ENCODE measurements at regions of chr6 and their contacts with region 1.

Region 1: GRCh38 chr6:136249811-136250685 is at the start of gene MTFR2:
- ATAC-seq: peak; percentile 84 to 99 (median 97)
- H3K4me3 ChIP-seq: peak within 1 kb of the TSS; percentile 49 to 65 (median 53)
- H3K27ac ChIP-seq: peak within 1 kb of the TSS; percentile 5 to 8
- H3K4me1 ChIP-seq: peaks cover 3 to 7% of the 10 kb centered on the region in 2 donors
- total RNA-seq, gene MTFR2: 0.54 to 9.3 (median 2.3) TPM

Region 2: DNA sequence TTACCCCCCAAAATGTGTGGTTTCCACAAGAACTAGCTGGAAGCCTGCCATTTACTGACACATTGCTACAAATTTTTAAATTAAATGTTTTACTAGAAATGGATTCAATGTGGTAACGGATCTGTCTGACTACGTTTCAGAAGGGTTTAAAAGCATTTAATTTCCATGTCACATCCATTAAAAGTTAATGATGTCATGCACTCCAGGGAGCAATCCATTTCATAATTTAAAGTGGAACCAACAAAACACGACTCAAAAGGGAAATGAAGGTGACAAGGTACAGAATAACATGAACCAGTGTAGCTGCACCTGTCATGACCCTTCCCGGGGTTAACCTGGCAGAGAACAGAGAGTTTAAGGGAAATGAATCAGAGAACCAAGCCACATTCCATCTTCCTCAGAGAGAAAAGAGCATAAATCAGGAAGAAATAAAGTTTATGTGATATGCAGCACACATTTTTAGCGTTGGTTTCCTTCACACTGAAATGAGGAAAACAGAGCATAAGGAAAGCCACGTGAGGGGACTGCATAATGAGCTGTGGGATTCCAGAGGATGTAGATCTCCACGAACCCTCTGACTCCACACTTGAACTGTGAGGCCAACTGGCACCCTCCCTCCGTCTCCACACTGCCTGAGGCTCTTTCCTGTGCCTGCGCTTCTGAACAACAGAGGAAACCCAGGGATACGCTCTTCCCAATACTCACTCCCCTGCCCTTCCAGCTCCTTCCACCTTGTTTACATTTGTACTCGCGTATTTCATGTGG is 582.2 kb before region 1 on chr6:
- in situ Hi-C with region 1: loop called in 1 of 9 experiments (anchors 25 kb)
- ATAC-seq: peak; percentile 80 to 100 (median 94)
- H3K4me3 ChIP-seq: no peak overlapping the region
- H3K27ac ChIP-seq: no peak overlapping the region
- H3K4me1 ChIP-seq: peaks cover 0 to 3% of the 10 kb centered on the region in 2 donors